HCT116 (cell line): ENCODE measurements at regions of chr11 and their contacts with region 1.

Region 1: DNA sequence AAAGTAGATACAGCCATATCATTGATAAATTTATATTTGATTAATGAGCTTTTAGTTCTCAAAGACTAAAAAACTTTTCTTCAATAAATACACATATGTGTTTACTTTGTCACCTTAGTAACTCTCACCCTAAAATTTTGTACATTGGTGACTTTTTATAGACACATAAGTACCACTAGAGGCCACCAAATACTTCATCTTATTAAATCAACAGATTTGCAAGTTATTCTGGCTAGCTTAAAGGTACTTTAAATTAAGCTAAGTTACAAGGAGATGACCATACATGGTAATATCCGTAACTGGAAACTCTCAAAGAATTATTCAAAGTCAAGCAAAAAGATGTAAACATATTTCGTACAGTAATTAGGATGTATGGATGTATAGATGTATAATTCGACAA is 112.2 kb downstream of the SBF2 start:
- DNase-seq: peak; percentile 26
- ATAC-seq: peak; percentile 49; the same call in 1 of the 2 replicates
- H3K4me3 ChIP-seq: no peak overlapping the region
- H3K27ac ChIP-seq: no peak overlapping the region
- H3K4me1 ChIP-seq: no peaks in the 10 kb centered on the region
- H3K27me3 ChIP-seq: no peaks in the 10 kb centered on the region
- CTCF ChIP-seq: peak; percentile 31 to 60 (median 36); a peak in 5 of 6 replicates
- POLR2A ChIP-seq: no peak
- RAD21 ChIP-seq: peak; percentile 55

Region 2: GRCh38 chr11:10208131-10208575 is 26.3 kb after region 1 on chr11:
- CTCF ChIA-PET with region 1: interaction called, 11 read pairs
- POLR2A ChIA-PET with region 1: no interaction called
- RAD21 ChIA-PET with region 1: no interaction called
- intact Hi-C with region 1: no loop called
- DNase-seq: peak; percentile 58
- ATAC-seq: peak; percentile 78
- H3K4me3 ChIP-seq: no peak overlapping the region
- H3K27ac ChIP-seq: no peak overlapping the region
- H3K4me1 ChIP-seq: peaks cover 0 to 8% of the 10 kb centered on the region in 2 experiments; a peak in 1 of 4 replicates
- H3K27me3 ChIP-seq: no peaks in the 10 kb centered on the region
- CTCF ChIP-seq: peak; percentile 54 to 73 (median 57); a peak in 5 of 6 replicates
- POLR2A ChIP-seq: no peak
- RAD21 ChIP-seq: peak; percentile 65